MCF 10A (cell line): ENCODE measurements at regions of chr22 and their contacts with region 1.

Region 1: DNA sequence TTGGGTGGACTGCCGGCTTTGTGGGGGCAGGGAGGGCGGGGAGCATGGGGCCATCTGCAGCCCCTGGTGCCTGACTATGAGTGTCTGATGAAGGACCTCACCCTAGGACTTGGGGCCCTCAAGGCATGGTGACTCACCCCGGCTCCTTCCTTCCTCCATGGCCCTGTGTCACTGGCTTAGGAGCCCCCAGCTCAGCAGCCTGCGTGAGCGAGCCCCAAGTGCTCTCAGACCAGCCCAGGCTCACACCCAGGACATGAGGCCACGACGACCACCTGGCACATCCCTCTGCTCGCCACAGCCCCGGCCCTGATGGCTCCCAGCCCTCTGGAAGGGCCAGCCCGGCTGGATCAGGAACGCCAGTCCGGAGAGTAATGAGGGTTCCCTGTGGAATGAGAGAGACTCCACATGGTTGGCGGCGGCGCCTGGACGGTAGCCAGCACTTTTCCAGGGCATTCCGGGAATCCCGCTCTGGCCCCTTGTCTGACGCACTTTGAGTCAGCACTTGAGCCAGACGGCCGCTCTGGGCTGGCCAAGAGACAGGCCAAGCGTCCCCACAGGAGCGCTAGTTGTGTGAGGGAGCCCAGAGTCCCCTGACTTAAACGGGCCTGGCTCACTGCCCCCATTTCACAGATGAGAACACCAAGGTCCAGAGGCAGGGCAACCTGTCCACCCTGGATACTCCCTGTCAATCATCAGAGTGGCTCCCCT is 50.7 kb upstream of the SHISAL1 start:
- DNase-seq: peak; percentile 98
- H3K4me3 Mint-ChIP-seq: peak overlapping the region; percentile 58
- H3K27ac Mint-ChIP-seq: peak overlapping the region; percentile 70
- H3K4me1 Mint-ChIP-seq: peaks cover 28% of the 10 kb centered on the region
- H3K27me3 Mint-ChIP-seq: no peaks in the 10 kb centered on the region
- CTCF ChIP-seq: no peak

Region 2: GRCh38 chr22:44181033-44181911 is 182.2 kb before region 1 on chr22:
- CTCF ChIA-PET with region 1: no interaction called
- POLR2A ChIA-PET with region 1: no interaction called
- intact Hi-C with region 1: no loop called
- DNase-seq: no peak
- H3K4me3 Mint-ChIP-seq: no peak overlapping the region
- H3K27ac Mint-ChIP-seq: no peak overlapping the region
- H3K4me1 Mint-ChIP-seq: peaks cover 14% of the 10 kb centered on the region
- H3K27me3 Mint-ChIP-seq: peaks cover 72% of the 10 kb centered on the region
- CTCF ChIP-seq: no peak

Region 3: GRCh38 chr22:44309137-44309536 is 54.3 kb before region 1 on chr22:
- CTCF ChIA-PET with region 1: no interaction called
- POLR2A ChIA-PET with region 1: no interaction called
- intact Hi-C with region 1: loop called (anchors 5 kb)
- DNase-seq: peak; percentile 93
- H3K4me3 Mint-ChIP-seq: peak overlapping the region; percentile 24
- H3K27ac Mint-ChIP-seq: no peak overlapping the region
- H3K4me1 Mint-ChIP-seq: peaks cover 12% of the 10 kb centered on the region
- H3K27me3 Mint-ChIP-seq: no peaks in the 10 kb centered on the region
- CTCF ChIP-seq: no peak

Region 4: GRCh38 chr22:44497218-44497904 is 133.9 kb after region 1 on chr22:
- CTCF ChIA-PET with region 1: no interaction called
- POLR2A ChIA-PET with region 1: no interaction called
- intact Hi-C with region 1: loop called (anchors 2 kb)
- DNase-seq: no peak
- H3K4me3 Mint-ChIP-seq: peak overlapping the region; percentile 76
- H3K27ac Mint-ChIP-seq: peak overlapping the region; percentile 69
- H3K4me1 Mint-ChIP-seq: peaks cover 6% of the 10 kb centered on the region
- H3K27me3 Mint-ChIP-seq: no peaks in the 10 kb centered on the region
- CTCF ChIP-seq: no peak

Region 5: DNA sequence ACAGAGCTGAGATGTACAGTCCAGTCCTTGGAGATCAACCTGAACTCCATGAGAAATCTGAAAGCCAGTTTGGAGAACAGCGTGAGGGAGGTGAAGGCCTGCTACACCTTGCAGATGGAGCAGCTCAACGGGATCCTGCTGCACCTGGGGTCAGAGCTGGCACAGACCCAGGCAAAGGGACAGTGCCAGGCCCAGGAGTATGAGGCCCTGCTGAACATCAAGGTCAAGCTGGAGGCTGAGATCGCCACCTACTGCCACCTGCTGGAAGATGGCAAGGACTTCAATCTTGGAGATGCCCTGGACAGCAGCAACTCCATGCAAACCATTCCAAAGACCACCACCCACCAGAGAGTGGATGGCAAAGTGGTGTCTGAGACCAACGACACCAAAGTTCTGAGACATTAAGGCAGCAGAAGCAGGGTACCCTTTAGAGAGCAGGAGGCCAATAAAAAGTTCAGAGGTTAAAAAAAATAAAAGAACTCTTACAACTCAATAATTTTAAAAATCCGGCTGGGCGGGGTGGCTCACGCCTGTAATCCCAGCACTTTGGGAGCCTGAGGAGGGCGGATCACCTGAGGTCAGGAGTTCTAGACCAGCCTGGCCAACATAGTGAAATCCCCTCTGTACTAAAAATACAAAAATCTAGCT is 204.5 kb after region 1 on chr22:
- CTCF ChIA-PET with region 1: no interaction called
- POLR2A ChIA-PET with region 1: no interaction called
- intact Hi-C with region 1: loop called (anchors 5 kb)
- DNase-seq: peak; percentile 68
- H3K4me3 Mint-ChIP-seq: no peak overlapping the region
- H3K27ac Mint-ChIP-seq: no peak overlapping the region
- H3K4me1 Mint-ChIP-seq: peaks cover 12% of the 10 kb centered on the region
- H3K27me3 Mint-ChIP-seq: no peaks in the 10 kb centered on the region
- CTCF ChIP-seq: peak; percentile 70